Activated B cell treated with CpG ODN at 0.5 μM for 24 hours (primary cell): ENCODE measurements at regions of chrX and their contacts with region 1.

Region 1: GRCh38 chrX:12974796-12975669 is at the start of gene TMSB4X:
- DNase-seq: peak; percentile 75
- ATAC-seq: peak; percentile 46
- H3K4me3 Mint-ChIP-seq: peak within 1 kb of the TSS; percentile 94
- H3K27ac Mint-ChIP-seq: peak within 1 kb of the TSS; percentile 97
- H3K4me1 Mint-ChIP-seq: peaks cover 58% of the 10 kb centered on the region
- H3K27me3 Mint-ChIP-seq: no peaks in the 10 kb centered on the region
- CTCF ChIP-seq: no peak
- total RNA-seq, gene TMSB4X: 5,922 and 6,273 TPM in 2 replicates

Region 2: DNA sequence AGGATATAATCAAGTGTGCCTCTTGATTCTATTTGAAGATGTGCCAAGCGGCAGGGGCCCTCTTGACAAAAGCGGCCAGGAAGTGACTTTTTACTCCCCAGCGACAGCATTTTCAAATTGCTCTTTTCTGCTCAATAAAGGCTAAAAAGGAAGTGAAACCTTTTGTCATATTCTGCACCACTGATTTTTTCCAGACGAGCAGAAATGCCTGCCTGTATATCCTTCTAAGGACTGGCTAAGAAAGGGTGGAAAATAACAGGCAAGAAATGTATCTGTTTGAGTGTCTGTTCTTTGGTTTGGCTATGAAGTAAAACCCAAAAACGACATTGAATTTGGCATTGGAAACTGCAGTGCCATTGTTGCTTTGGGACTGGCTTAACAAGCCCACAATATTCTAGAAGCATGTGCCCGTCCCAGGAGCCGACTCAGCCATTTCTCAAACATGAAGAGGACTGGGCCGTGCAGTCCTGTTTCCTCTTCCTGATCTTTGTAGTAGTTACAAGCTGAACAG is 25.3 kb after region 1 on chrX:
- CTCF ChIA-PET with region 1: interaction called, 4 read pairs
- POLR2A ChIA-PET with region 1: interaction called, 836 read pairs
- intact Hi-C with region 1: loop called (anchors 1 kb)
- DNase-seq: no peak
- ATAC-seq: peak; percentile 66
- H3K4me3 Mint-ChIP-seq: peak overlapping the region; percentile 64
- H3K27ac Mint-ChIP-seq: peak overlapping the region; percentile 92
- H3K4me1 Mint-ChIP-seq: peaks cover 72% of the 10 kb centered on the region
- H3K27me3 Mint-ChIP-seq: no peaks in the 10 kb centered on the region
- CTCF ChIP-seq: no peak

Region 3: DNA sequence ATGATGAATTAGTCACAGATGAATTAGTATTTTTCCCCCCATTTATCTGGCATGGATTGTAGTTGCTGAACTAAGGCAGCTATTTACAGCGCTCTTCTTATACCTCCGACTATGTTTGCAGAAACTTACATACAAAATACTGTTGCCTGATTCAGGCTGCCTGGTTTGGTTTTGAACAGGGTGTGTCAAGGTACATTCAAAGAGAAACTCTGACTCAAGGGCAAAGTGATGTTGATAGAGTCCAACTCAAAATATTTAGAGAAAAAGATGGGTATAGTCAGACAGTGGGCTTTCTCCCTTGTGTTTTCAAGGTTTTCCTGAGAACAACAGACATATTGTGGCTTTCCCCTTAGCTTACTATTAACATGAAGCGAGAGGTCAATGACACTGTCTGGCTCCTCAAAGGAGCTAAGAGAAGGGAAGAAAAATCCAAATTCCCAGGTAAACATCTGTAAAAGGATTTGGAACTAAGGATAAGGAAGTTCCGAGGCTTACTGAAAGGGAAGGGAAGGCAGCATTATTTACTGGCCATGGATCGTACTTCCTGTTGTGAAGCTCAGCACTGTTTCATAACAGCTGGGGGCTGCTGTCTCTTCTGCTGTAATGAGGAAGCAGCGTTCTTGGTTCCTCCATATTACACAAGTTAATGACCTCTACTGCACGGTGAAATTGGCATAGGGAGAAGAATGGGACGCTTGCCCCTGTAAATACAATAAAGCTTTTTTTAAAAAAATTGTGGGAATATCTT is 38.5 kb after region 1 on chrX:
- CTCF ChIA-PET with region 1: no interaction called
- POLR2A ChIA-PET with region 1: interaction called, 836 read pairs
- intact Hi-C with region 1: no loop called
- DNase-seq: no peak
- ATAC-seq: peak; percentile 90
- H3K4me3 Mint-ChIP-seq: peak overlapping the region; percentile 36
- H3K27ac Mint-ChIP-seq: peak overlapping the region; percentile 64
- H3K4me1 Mint-ChIP-seq: peaks cover 65% of the 10 kb centered on the region
- H3K27me3 Mint-ChIP-seq: no peaks in the 10 kb centered on the region
- CTCF ChIP-seq: no peak

Region 4: GRCh38 chrX:13064599-13065143 is 89.6 kb after region 1 on chrX:
- CTCF ChIA-PET with region 1: no interaction called
- POLR2A ChIA-PET with region 1: no interaction called
- intact Hi-C with region 1: no loop called
- DNase-seq: no peak
- ATAC-seq: peak; percentile 18
- H3K4me3 Mint-ChIP-seq: no peak overlapping the region
- H3K27ac Mint-ChIP-seq: no peak overlapping the region
- H3K4me1 Mint-ChIP-seq: peaks cover 23% of the 10 kb centered on the region
- H3K27me3 Mint-ChIP-seq: no peaks in the 10 kb centered on the region
- CTCF ChIP-seq: no peak

Region 5: DNA sequence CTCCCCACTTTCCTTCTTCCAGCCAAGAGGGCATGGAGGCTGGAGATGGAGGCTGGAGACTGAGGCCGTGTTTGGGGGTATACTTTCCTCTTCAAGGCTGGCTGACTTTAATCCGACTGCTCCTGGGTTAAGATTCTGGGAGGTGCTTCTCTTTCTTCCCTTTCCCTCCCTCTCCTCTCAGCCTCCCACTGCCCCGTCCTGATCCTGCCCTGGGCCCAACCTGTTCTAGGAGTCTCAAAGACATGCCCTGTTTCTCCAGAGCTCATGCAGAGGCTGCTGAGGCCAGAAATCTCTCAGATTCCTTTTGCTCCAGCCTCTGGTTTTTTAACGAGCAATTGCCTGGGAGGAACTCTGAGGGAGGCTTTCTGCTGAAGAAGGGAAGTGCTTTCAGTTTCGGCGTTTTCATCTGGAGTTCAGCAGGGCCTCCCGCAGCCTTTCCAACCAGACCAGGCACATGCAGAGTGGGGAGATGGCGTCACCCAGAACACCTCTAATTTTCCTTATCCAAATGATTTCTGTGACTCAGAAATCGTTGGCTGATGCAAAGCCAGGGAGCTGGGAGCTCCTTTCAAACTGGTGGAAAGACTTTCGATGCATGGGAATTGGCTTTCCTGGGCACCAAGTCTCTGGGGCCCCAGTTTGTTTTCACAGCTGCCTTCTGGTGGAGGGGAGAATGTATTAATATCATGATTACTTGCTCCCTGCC is 103.9 kb after region 1 on chrX:
- CTCF ChIA-PET with region 1: interaction called, 9 read pairs
- POLR2A ChIA-PET with region 1: interaction called, 847 read pairs
- intact Hi-C with region 1: loop called (anchors 1 kb)
- DNase-seq: no peak
- ATAC-seq: no peak
- H3K4me3 Mint-ChIP-seq: peak overlapping the region; percentile 56
- H3K27ac Mint-ChIP-seq: peak overlapping the region; percentile 89
- H3K4me1 Mint-ChIP-seq: peaks cover 94% of the 10 kb centered on the region
- H3K27me3 Mint-ChIP-seq: no peaks in the 10 kb centered on the region
- CTCF ChIP-seq: no peak

Region 6: GRCh38 chrX:13341491-13342101 is 366.6 kb after region 1 on chrX:
- CTCF ChIA-PET with region 1: no interaction called
- POLR2A ChIA-PET with region 1: interaction called, 3 read pairs
- intact Hi-C with region 1: loop called (anchors 10 kb)
- DNase-seq: no peak
- ATAC-seq: no peak
- H3K4me3 Mint-ChIP-seq: no peak overlapping the region
- H3K27ac Mint-ChIP-seq: no peak overlapping the region
- H3K4me1 Mint-ChIP-seq: peaks cover 20% of the 10 kb centered on the region
- H3K27me3 Mint-ChIP-seq: no peaks in the 10 kb centered on the region
- CTCF ChIP-seq: no peak